ENCODE measurements at regions of chr19 and their contacts with region 1.

Region 1: DNA sequence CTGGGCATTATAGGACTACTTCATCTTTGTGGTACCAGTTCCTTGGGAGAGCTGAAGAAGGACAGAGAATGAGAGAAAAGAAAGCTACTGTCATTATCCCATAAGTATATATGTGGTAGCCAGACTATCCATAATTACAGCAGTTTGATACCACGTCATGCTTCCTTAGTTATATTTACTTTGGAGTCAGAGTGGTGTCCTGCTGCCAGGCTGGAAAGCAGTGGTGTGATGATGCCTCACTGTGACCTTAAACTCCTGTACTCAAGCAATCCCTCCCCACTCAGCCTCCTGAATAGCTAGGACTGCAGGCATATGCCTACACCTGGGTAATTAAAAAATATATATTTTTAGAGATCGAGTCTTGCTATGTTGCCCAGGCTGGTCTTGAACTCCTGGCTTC is 57.8 kb downstream of the WTIP start:
- DNase-seq: no peak
- ATAC-seq: no peak
- H3K4me3 ChIP-seq: no peak overlapping the region
- H3K27ac ChIP-seq: no peak overlapping the region
- H3K4me1 ChIP-seq: no peaks in the 10 kb centered on the region
- H3K27me3 ChIP-seq: no peaks in the 10 kb centered on the region
- CTCF ChIP-seq: no peak

Region 2: DNA sequence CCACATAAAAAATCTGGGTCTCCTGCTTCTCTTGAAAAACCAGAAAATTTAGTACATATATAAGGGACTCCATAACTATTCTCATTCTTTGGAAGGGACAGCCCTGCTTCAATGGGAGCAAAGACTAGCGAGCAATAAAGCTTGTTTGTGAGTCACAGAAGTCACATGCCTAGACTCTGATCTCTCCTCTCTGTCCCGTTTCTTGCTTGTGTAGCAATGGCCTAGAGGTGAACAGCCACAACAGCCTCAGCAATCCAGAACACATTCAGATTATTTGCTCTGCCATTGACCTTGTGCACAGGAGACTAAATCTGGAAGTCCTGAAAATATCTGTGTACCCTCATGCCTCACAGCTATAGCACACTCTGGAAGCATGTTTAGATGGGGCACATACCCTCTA is 94.4 kb after region 1 on chr19:
- intact Hi-C with region 1: no loop called
- DNase-seq: no peak
- ATAC-seq: no peak
- H3K4me3 ChIP-seq: no peak overlapping the region
- H3K27ac ChIP-seq: no peak overlapping the region
- H3K4me1 ChIP-seq: no peaks in the 10 kb centered on the region
- H3K27me3 ChIP-seq: no peaks in the 10 kb centered on the region
- CTCF ChIP-seq: no peak

Region 3: DNA sequence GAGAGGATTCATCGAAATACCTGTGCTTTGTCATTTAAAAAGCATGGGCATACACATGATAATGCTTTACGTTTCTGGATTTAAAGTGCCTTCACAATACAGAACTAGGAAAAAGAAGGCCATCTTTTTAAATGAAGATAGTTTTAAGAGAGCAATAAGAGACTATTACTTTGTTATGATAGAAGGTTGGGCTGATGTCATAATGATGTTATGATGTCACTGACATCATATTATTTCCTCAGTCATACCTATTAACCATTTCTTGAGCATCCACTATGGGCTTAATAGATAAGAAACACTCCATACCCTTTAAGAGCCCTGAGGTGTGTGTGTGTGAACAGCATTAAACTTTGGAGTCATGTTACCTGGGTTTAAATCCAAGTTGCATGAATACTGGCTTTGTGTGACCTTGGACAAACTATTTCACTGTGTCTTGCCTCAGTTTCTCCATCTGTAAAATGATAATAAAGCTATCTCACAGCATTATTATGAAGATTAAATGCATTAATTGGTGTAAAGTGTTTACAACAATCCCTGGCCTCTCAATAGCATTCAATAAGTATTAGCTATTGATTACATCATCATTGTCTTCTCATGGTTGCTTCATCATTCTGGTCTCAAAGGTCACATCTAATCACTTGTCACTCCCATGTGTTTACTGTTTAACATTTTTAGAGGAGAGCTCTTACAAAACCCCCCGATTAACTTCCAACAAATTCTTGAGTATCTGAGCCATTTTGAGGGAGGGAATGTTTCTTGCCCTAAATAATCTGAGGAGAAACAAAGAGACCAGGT is 205.7 kb after region 1 on chr19:
- intact Hi-C with region 1: loop called in 2 of 3 experiments (anchors 5 kb)
- DNase-seq: no peak
- ATAC-seq: no peak
- H3K4me3 ChIP-seq: no peak overlapping the region
- H3K27ac ChIP-seq: no peak overlapping the region
- H3K4me1 ChIP-seq: no peaks in the 10 kb centered on the region
- H3K27me3 ChIP-seq: no peaks in the 10 kb centered on the region
- CTCF ChIP-seq: no peak